Endothelial cell of umbilical vein (primary cell): ENCODE measurements at regions of chr19 and their contacts with region 1.

Region 1: DNA sequence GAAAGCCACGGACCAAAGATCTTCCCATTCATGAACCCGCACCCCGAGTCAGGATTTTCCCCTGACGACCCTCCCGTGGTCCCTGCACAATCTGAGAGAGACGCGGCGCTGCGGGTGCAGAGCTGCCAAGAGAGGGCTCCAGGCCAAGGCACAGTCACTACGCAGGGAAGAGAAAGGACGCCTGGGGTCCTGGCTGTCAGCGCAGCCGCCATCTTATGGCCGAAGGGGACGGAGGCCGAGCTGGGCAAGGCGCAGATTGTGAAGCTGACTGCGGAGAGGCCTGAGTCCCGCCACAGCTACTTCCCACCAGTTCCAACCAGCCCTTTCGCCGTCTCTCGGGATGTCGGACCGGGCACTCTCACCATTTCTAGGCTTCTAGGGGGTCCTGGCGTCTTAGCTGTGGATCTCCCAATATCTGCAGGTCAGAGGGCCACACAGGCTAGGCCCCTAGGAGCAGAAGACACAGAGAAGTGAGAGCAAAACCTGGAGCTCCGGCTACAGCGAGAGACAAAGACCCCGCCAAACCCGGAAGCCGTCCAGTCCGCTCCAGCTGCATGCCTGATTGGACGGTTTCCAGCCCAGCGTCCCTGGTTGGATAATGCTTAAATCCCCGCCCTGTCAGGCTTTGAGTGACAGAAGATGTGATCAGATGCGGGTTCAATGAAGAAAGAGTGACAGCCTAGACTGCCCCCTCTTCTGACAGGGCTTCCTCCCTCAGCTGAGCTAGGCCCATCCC is at the start of gene ZNF100:
- DNase-seq: peak; percentile 93
- H3K4me3 ChIP-seq: peak within 1 kb of the TSS; percentile 66 to 84 (median 83)
- H3K27ac ChIP-seq: peak within 1 kb of the TSS; percentile 90
- H3K4me1 ChIP-seq: peaks cover 2% of the 10 kb centered on the region
- H3K27me3 ChIP-seq: no peaks in the 10 kb centered on the region
- CTCF ChIP-seq: no peak
- POLR2A ChIP-seq: peak; percentile 64
- total RNA-seq, gene ZNF100: 12.7 and 12.8 TPM in 2 replicates

Region 2: DNA sequence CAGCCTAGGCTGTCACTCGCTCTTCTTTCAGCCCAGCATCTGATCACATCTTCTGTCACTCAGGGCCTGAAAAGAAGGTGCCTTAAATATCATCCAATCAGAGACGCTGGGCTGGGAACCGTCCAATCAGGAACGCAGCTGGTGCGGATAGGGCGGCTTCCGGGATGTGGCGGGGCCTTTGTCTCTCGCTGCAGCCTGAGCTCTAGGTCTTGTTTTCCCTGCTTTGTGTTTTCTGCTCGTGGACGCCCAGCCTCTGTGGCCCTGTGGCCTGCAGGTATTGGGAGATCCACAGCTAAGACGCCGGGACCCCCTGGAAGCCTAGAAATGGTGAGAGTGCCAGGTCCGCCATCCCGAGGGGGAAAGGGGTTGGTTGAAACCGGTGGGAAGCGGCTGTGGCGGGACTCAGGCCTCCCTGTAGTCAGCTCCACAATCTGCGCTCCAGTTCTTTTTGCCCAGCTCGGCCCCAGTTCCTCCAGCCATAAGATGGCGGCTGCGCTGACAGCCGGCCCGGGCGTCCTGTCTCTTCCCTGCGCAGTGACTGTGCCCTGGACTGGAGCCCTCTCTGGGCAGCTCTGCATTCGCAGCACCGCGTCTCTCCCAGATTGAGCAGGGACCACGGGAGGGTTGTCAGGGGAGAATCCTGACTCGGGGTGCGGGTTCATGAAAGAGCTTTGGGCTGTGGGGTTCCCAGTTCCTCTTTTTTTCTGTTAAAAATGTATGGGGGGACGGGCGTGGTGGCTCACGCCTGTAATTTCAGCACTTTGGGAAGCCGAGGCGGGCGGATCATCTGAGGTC is 844.0 kb before region 1 on chr19 and contains the start of gene ZNF85:
- CTCF ChIA-PET with region 1: interaction called, 3 read pairs
- POLR2A ChIA-PET with region 1: no interaction called
- dilution Hi-C with region 1: no loop called
- intact Hi-C with region 1: loop called (anchors 2 kb)
- DNase-seq: peak; percentile 94
- H3K4me3 ChIP-seq: peak within 1 kb of the TSS; percentile 66 to 86 (median 78)
- H3K27ac ChIP-seq: peak within 1 kb of the TSS; percentile 74
- H3K4me1 ChIP-seq: no peaks in the 10 kb centered on the region
- H3K27me3 ChIP-seq: no peaks in the 10 kb centered on the region
- CTCF ChIP-seq: no peak
- POLR2A ChIP-seq: peak; percentile 70
- total RNA-seq, gene ZNF85: 9.2 and 9.5 TPM in 2 replicates

Region 3: GRCh38 chr19:21141787-21142464 is 625.3 kb before region 1 on chr19 and contains the start of gene ZNF431:
- CTCF ChIA-PET with region 1: no interaction called
- POLR2A ChIA-PET with region 1: interaction called, 4 read pairs
- dilution Hi-C with region 1: no loop called
- intact Hi-C with region 1: loop called (anchors 5 kb)
- DNase-seq: peak; percentile 95
- H3K4me3 ChIP-seq: peak within 1 kb of the TSS; percentile 60 to 87 (median 64)
- H3K27ac ChIP-seq: peak within 1 kb of the TSS; percentile 58
- H3K4me1 ChIP-seq: peaks cover 5% of the 10 kb centered on the region
- H3K27me3 ChIP-seq: no peaks in the 10 kb centered on the region
- CTCF ChIP-seq: no peak
- POLR2A ChIP-seq: peak; percentile 79
- total RNA-seq, gene ZNF431: 10.7 and 12.0 TPM in 2 replicates

Region 4: GRCh38 chr19:21256722-21257121 is 510.5 kb before region 1 on chr19:
- CTCF ChIA-PET with region 1: no interaction called
- POLR2A ChIA-PET with region 1: no interaction called
- dilution Hi-C with region 1: no loop called
- intact Hi-C with region 1: no loop called
- DNase-seq: no peak
- H3K4me3 ChIP-seq: no peak overlapping the region
- H3K27ac ChIP-seq: no peak overlapping the region
- H3K4me1 ChIP-seq: no peaks in the 10 kb centered on the region
- H3K27me3 ChIP-seq: no peaks in the 10 kb centered on the region
- CTCF ChIP-seq: no peak
- POLR2A ChIP-seq: no peak

Region 5: DNA sequence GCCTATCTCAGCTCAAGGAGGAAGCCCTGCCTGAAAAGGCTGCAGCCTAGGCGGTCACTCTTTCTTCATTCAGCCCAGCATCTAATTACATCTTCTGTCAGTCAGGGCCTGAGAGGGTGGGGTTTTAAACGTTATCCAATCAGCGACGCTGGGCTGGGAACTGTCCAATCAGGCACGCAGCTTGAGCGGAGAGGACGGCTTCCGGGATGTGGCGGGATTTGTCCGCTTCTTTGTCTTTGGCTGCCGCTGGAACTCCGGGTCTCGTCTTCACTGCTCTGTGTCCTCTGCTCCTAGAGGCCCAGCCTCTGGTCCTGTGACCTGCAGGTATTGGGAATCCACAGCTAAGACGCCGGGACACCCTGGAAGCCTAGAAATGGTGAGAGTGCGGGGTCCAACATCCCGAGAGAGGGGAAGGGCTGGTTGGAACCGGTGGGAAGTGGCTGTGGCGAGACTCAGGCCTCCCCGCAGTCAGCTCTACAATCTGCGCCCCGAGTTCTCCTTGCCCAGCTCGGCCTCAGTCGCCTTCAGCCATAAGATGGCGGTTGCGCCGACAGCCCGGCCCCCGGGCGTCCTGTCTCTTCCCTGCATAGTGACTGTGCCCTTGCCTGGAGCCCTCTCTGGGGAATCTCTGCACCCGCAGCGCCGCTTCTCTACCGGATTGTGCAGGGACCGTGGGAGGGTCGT is 408.3 kb before region 1 on chr19 and contains the start of gene ZNF738:
- CTCF ChIA-PET with region 1: no interaction called
- POLR2A ChIA-PET with region 1: no interaction called
- dilution Hi-C with region 1: no loop called
- intact Hi-C with region 1: loop called (anchors 1 kb)
- DNase-seq: peak; percentile 96
- H3K4me3 ChIP-seq: peak within 1 kb of the TSS; percentile 77 to 93 (median 92)
- H3K27ac ChIP-seq: peak within 1 kb of the TSS; percentile 90
- H3K4me1 ChIP-seq: no peaks in the 10 kb centered on the region
- H3K27me3 ChIP-seq: no peaks in the 10 kb centered on the region
- CTCF ChIP-seq: no peak
- POLR2A ChIP-seq: peak; percentile 48
- total RNA-seq, gene ZNF738: 10.1 and 10.8 TPM in 2 replicates

Region 6: GRCh38 chr19:21505459-21506451 is 261.5 kb before region 1 on chr19 and contains the start of gene ZNF429:
- CTCF ChIA-PET with region 1: no interaction called
- POLR2A ChIA-PET with region 1: no interaction called
- dilution Hi-C with region 1: no loop called
- intact Hi-C with region 1: loop called (anchors 5 kb)
- DNase-seq: peak; percentile 67
- H3K4me3 ChIP-seq: peak within 1 kb of the TSS in 2 of 3 experiments; percentile 37 to 52
- H3K27ac ChIP-seq: no peak within 1 kb of the TSS
- H3K4me1 ChIP-seq: no peaks in the 10 kb centered on the region
- H3K27me3 ChIP-seq: no peaks in the 10 kb centered on the region
- CTCF ChIP-seq: no peak
- POLR2A ChIP-seq: no peak
- total RNA-seq, gene ZNF429: 2.4 and 2.6 TPM in 2 replicates

Region 7: GRCh38 chr19:21713761-21714160 is 53.5 kb before region 1 on chr19:
- CTCF ChIA-PET with region 1: no interaction called
- POLR2A ChIA-PET with region 1: no interaction called
- dilution Hi-C with region 1: no loop called
- intact Hi-C with region 1: no loop called
- DNase-seq: no peak
- H3K4me3 ChIP-seq: no peak overlapping the region
- H3K27ac ChIP-seq: no peak overlapping the region
- H3K4me1 ChIP-seq: no peaks in the 10 kb centered on the region
- H3K27me3 ChIP-seq: no peaks in the 10 kb centered on the region
- CTCF ChIP-seq: no peak
- POLR2A ChIP-seq: no peak

Region 8: DNA sequence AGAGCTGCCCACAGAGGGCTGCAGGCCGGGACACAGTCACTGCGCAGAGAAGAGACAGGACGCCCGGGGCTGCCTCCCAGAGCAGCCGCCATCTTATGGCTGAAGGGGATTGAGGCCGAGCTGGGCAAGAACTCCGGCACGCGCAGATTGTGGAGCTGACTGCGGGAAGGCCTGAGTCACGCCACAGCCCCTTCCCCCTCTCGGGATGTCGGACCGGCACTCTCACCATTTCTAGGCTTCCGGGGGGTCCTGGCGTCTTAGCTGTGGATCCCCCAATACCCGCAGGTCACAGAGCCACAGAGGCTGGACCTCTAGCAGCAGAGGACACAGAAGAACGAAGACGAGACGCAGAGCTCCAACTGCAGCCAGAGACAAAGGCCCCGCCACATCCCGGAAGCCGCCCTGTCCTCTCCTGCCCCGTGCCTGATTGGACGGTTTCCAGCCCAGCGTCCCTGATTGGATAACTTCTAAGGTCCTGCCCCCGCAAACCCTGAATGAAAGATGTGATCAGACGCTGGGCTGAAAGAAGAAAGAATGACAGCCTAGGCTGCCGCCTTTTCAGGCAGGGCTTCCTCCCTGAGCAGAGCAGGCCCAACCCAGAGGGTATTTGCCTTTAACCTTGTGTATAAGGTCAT is 68.7 kb after region 1 on chr19 and contains the start of gene ZNF43:
- CTCF ChIA-PET with region 1: interaction called, 4 read pairs
- POLR2A ChIA-PET with region 1: interaction called, 7 read pairs
- dilution Hi-C with region 1: no loop called
- intact Hi-C with region 1: loop called (anchors 1 kb)
- DNase-seq: peak; percentile 91
- H3K4me3 ChIP-seq: peak within 1 kb of the TSS; percentile 50 to 74 (median 56)
- H3K27ac ChIP-seq: peak within 1 kb of the TSS; percentile 84
- H3K4me1 ChIP-seq: no peaks in the 10 kb centered on the region
- H3K27me3 ChIP-seq: no peaks in the 10 kb centered on the region
- CTCF ChIP-seq: no peak
- POLR2A ChIP-seq: peak; percentile 92
- total RNA-seq, gene ZNF43: 20.2 and 21.1 TPM in 2 replicates

Region 9: DNA sequence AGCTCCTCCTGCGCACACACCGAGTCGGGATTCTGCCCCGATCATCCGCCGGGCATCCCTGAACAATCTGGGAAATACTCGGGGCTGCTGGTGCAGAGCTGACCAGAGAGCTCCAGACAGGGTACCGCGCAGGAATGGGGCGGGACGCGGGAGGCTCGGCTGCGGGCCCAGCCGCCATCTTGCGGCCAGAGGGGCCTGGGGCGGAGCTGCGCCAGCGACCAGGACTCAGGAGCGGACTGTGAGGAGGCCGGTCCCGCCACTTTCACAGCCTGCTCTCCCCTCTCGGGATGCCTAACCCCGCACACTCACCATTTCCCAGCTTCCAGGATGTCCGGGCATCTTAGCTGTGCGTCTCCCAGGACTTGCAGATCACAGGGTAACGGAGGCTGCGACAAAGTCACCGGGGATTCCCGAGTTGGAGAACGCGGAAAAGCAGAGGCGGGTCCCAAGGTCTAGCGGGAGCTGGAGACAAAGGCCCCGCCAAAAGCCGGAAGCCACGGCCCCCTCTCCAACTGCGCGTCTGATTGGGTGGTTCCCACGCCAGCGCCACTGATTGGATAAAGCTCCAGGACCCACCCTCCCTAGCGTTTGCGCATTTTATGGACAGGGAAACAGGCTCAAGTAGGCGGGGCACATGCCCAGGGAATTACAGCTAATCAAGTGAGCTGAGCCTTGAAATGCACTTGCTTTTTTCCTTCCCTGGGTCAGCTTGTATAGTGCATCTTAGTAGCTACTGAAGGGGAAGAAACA is 84.5 kb after region 1 on chr19:
- CTCF ChIA-PET with region 1: interaction called, 4 read pairs
- POLR2A ChIA-PET with region 1: interaction called, 6 read pairs
- dilution Hi-C with region 1: no loop called
- intact Hi-C with region 1: loop called (anchors 5 kb)
- DNase-seq: peak; percentile 95
- H3K4me3 ChIP-seq: peak overlapping the region; percentile 68 to 82 (median 82)
- H3K27ac ChIP-seq: peak overlapping the region; percentile 84
- H3K4me1 ChIP-seq: peaks cover 6% of the 10 kb centered on the region
- H3K27me3 ChIP-seq: no peaks in the 10 kb centered on the region
- CTCF ChIP-seq: no peak
- POLR2A ChIP-seq: no peak